ENCODE measurements at regions of chr4 and their contacts with region 1.

Region 1: GRCh38 chr4:185471235-185472102 is at the start of gene CCDC110:
- DNase-seq: peak; percentile 94 to 99 (median 96)
- H3K4me3 ChIP-seq: peak within 1 kb of the TSS; percentile 75
- H3K27ac ChIP-seq: peak within 1 kb of the TSS; percentile 50 to 79
- H3K4me1 ChIP-seq: peaks cover 1% of the 10 kb centered on the region
- H3K27me3 ChIP-seq: no peaks in the 10 kb centered on the region
- CTCF ChIP-seq: peak; percentile 77 to 82 (median 79)
- EP300 ChIP-seq: no peak
- POLR2A ChIP-seq: peak; percentile 65
- total RNA-seq, gene CCDC110: 2.8 to 6.4 (median 3.3) TPM

Region 2: GRCh38 chr4:185534866-185535611 is 63.6 kb after region 1 on chr4 and contains the start of gene PDLIM3:
- intact Hi-C with region 1: loop called in 1 of 4 experiments (anchors 10 kb)
- DNase-seq: peak; percentile 73 to 88 (median 84)
- H3K4me3 ChIP-seq: peak within 1 kb of the TSS; percentile 57
- H3K27ac ChIP-seq: peak within 1 kb of the TSS; percentile 73 to 89
- H3K4me1 ChIP-seq: peaks cover 6% of the 10 kb centered on the region
- H3K27me3 ChIP-seq: no peaks in the 10 kb centered on the region
- CTCF ChIP-seq: no peak
- EP300 ChIP-seq: no peak
- POLR2A ChIP-seq: peak; percentile 93
- total RNA-seq, gene PDLIM3: 40.9 to 220 (median 78.7) TPM

Region 3: GRCh38 chr4:185587427-185588161 is 116.1 kb after region 1 on chr4:
- intact Hi-C with region 1: loop called in 1 of 4 experiments (anchors 5 kb)
- DNase-seq: no peak
- H3K4me3 ChIP-seq: no peak overlapping the region
- H3K27ac ChIP-seq: no peak overlapping the region
- H3K4me1 ChIP-seq: peaks cover 4% of the 10 kb centered on the region
- H3K27me3 ChIP-seq: no peaks in the 10 kb centered on the region
- CTCF ChIP-seq: no peak
- EP300 ChIP-seq: no peak
- POLR2A ChIP-seq: no peak

Region 4: DNA sequence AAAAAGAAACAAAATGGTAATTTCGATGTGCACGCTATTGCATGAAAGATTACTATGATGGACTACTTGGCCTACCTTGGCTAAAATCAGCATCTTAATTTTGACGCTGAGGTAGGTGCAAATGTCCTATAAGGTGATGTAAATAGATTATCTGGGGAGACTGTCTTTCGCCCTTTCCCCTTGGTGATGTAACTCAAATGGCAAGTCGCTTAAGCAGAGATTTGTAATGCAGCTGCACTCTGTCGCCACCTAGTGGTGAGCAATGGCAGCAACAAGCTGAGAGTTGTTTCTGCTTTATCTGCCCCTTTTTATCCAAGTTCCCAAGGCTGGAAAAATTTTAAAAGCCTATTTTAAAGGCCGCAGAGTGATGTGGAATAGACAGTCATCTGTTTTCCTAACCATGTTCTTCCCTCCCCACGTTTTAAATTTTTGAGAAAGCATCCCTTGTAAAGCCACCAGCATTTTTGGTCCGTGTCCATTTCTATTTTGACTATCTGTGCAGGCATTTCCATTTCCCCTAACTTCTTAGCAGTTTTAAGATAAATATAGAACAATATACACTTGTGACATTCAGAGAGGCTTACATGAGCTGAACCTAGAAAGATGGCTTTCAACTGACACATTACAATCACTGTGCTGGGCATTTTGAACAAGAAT is 126.2 kb after region 1 on chr4:
- intact Hi-C with region 1: loop called (anchors 1 to 5 kb)
- DNase-seq: peak; percentile 71 to 86 (median 85)
- H3K4me3 ChIP-seq: no peak overlapping the region
- H3K27ac ChIP-seq: no peak overlapping the region
- H3K4me1 ChIP-seq: no peaks in the 10 kb centered on the region
- H3K27me3 ChIP-seq: no peaks in the 10 kb centered on the region
- CTCF ChIP-seq: peak; percentile 95 to 100 (median 97)
- EP300 ChIP-seq: no peak
- POLR2A ChIP-seq: no peak

Region 5: DNA sequence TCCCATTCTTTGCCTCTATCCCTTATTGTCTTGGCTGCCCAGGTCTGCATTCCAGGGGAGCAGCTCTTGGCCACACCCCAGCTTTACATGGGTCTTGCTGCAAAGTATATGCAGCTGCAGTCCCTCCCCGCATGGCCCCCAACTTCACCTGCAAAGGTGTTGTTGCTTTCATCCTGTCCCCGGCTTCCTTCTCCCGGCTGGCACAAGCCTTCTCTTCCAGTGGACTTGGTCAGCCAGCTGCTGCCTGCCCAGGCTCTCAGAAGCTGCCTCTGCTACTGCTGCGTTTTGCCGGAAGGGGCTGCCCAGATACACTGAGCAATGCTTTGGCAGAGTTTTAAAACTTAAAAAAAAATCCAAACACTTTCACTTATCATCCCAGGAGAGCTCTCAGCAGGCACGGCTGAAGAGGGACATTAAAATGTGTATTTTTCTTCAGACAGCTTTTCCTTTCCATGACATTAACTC is 185.0 kb after region 1 on chr4:
- intact Hi-C with region 1: no loop called
- DNase-seq: peak; percentile 58 to 70 (median 65)
- H3K4me3 ChIP-seq: peak overlapping the region; percentile 15
- H3K27ac ChIP-seq: no peak overlapping the region
- H3K4me1 ChIP-seq: peaks cover 7% of the 10 kb centered on the region
- H3K27me3 ChIP-seq: no peaks in the 10 kb centered on the region
- CTCF ChIP-seq: peak in 2 of 3 donors; percentile 52 to 61
- EP300 ChIP-seq: no peak
- POLR2A ChIP-seq: no peak